ENCODE measurements at regions of chr1 and their contacts with region 1.

Region 1: GRCh38 chr1:113835642-113836307 is 23.5 kb upstream of the RSBN1 start:
- DNase-seq: no peak
- H3K4me3 ChIP-seq: no peak overlapping the region
- H3K27ac ChIP-seq: no peak overlapping the region
- H3K4me1 ChIP-seq: no peaks in the 10 kb centered on the region
- H3K27me3 ChIP-seq: no peaks in the 10 kb centered on the region
- CTCF ChIP-seq: peak; percentile 54 to 65 (median 63)
- EP300 ChIP-seq: no peak
- POLR2A ChIP-seq: no peak

Region 2: GRCh38 chr1:113949007-113949406 is 113.2 kb after region 1 on chr1:
- intact Hi-C with region 1: loop called (anchors 10 kb)
- DNase-seq: no peak
- H3K4me3 ChIP-seq: no peak overlapping the region
- H3K27ac ChIP-seq: peak overlapping the region; percentile 35 to 59 (median 58)
- H3K4me1 ChIP-seq: peaks cover 27 to 73% (median 67%) of the 10 kb centered on the region in 4 donors
- H3K27me3 ChIP-seq: no peaks in the 10 kb centered on the region
- CTCF ChIP-seq: peak in 1 of 3 experiments; percentile 33
- EP300 ChIP-seq: no peak
- POLR2A ChIP-seq: no peak

Region 3: DNA sequence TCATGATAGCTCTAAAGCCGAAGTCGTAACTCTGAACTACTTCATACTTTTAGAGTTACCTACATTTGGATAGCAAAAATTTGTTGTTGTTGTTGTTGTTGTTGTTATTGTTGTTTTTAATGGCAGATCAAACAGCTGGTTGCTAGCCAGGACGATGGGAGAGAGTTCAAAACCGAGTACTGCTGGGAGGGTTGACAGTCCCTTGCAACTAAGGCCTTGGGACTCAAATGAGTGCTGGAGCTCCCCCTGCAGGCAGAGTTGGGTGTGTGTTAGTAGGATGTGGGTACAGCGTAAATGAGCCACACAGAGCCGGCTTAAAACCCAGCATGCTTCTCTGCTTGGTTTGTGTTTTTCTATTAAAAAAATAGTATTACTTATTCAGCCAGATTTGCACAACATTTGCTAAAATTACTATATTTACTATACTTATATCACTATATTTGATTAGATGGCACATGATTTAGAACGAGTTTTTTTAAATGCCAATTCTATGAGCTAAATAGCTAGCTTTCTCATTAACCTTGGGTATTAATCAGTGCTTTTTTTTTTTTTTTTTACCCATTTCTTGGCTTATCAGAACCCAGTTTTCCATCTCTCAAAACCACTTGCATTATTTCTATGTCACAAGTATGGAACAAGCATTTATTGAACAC is 447.1 kb after region 1 on chr1:
- intact Hi-C with region 1: loop called (anchors 2 kb)
- DNase-seq: peak; percentile 94
- H3K4me3 ChIP-seq: no peak overlapping the region
- H3K27ac ChIP-seq: no peak overlapping the region
- H3K4me1 ChIP-seq: no peaks in the 10 kb centered on the region
- H3K27me3 ChIP-seq: no peaks in the 10 kb centered on the region
- CTCF ChIP-seq: peak; percentile 81 to 90 (median 86)
- EP300 ChIP-seq: no peak
- POLR2A ChIP-seq: no peak